ENCODE measurements at regions of chr15 and their contacts with region 1.

Region 1: GRCh38 chr15:74642729-74643367 is 27.2 kb downstream of the CLK3 start:
- DNase-seq: peak; percentile 43 to 73 (median 60)
- ATAC-seq: peak; percentile 89
- H3K4me3 ChIP-seq: no peak overlapping the region
- H3K27ac ChIP-seq: peak overlapping the region; percentile 63
- H3K4me1 ChIP-seq: peaks cover 8 to 25% of the 10 kb centered on the region in 2 experiments; a peak in 3 of 5 replicates
- H3K27me3 ChIP-seq: no peaks in the 10 kb centered on the region
- CTCF ChIP-seq: 0 out of 6 replicates have a peak, but pooled peaks of 1 of the 3 experiments have one; percentile 6
- EP300 ChIP-seq: no peak; the same call in 1 of the 2 replicates
- POLR2A ChIP-seq: no peak
- RAD21 ChIP-seq: no peak

Region 2: GRCh38 chr15:74291101-74292071 is 351.5 kb before region 1 on chr15:
- CTCF ChIA-PET with region 1: no interaction called
- POLR2A ChIA-PET with region 1: no interaction called
- in situ Hi-C with region 1: no loop called
- intact Hi-C with region 1: no loop called
- DNase-seq: peak; percentile 84 to 91 (median 88)
- ATAC-seq: peak; percentile 97
- H3K4me3 ChIP-seq: no peak overlapping the region
- H3K27ac ChIP-seq: peak overlapping the region; percentile 57; the same call in 1 of the 3 replicates
- H3K4me1 ChIP-seq: peaks cover 5 to 13% of the 10 kb centered on the region in 2 experiments; a peak in 4 of 5 replicates
- H3K27me3 ChIP-seq: 0 out of 5 replicates have a peak, but pooled peaks cover 0 to 5% of the 10 kb centered on the region in 2 experiments
- CTCF ChIP-seq: no peak
- EP300 ChIP-seq: peak; percentile 66; the same call in 1 of the 2 replicates
- POLR2A ChIP-seq: no peak
- RAD21 ChIP-seq: no peak

Region 3: GRCh38 chr15:74709011-74709410 is 66.2 kb after region 1 on chr15:
- CTCF ChIA-PET with region 1: no interaction called
- POLR2A ChIA-PET with region 1: no interaction called
- in situ Hi-C with region 1: no loop called
- intact Hi-C with region 1: loop called (anchors 2 kb)
- DNase-seq: no peak
- ATAC-seq: no peak
- H3K4me3 ChIP-seq: no peak overlapping the region
- H3K27ac ChIP-seq: no peak overlapping the region
- H3K4me1 ChIP-seq: no peaks in the 10 kb centered on the region
- H3K27me3 ChIP-seq: peaks cover 8 to 17% of the 10 kb centered on the region in 2 experiments
- CTCF ChIP-seq: no peak
- EP300 ChIP-seq: no peak
- POLR2A ChIP-seq: no peak
- RAD21 ChIP-seq: no peak